Transverse colon (tissue), 4 donors: ENCODE measurements at regions of chr15 and their contacts with region 1.

Region 1: GRCh38 chr15:26950001-26950400 is 21.0 kb upstream of the GABRG3 start:
- DNase-seq: no peak
- H3K4me3 ChIP-seq: no peak overlapping the region
- H3K27ac ChIP-seq: no peak overlapping the region
- H3K4me1 ChIP-seq: no peaks in the 10 kb centered on the region
- H3K27me3 ChIP-seq: no peaks in the 10 kb centered on the region
- CTCF ChIP-seq: no peak
- EP300 ChIP-seq: no peak
- POLR2A ChIP-seq: no peak

Region 2: DNA sequence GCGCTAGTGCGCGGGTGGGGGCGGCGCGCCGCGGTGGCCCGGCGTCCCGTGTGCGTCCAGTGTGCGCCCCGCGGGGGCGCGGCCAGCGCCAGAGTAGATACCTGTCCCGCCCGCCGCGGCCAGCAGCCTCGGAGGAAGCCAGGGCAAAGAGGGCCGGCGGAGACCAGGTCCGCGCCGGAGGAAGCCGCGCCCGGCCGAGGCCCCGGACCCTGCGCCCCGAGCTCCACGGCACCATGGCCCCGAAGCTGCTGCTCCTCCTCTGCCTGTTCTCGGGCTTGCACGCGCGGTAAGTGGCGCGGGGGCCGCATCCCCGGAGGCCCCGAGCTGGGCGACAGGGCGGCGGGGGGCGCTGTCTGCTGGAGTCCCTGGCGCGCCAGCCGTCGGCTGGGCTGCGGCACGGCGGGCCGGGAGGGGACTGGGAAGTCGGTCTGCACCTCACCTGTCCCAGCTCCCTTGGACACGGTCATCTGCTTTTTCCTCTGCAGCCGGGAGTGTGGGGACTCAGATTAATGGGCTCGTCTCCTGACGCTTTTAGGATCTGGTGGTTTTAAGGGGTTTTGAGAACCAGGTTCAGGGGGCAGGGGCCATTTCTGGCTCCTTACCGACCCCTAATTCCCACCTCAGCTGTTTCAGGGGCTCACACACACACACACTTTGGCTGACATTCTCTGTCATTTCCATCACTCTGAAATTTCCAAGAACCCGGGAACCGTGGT is 21.5 kb after region 1 on chr15:
- in situ Hi-C with region 1: no loop called
- intact Hi-C with region 1: loop called (anchors 2 kb)
- DNase-seq: no peak
- H3K4me3 ChIP-seq: no peak overlapping the region
- H3K27ac ChIP-seq: no peak overlapping the region
- H3K4me1 ChIP-seq: no peaks in the 10 kb centered on the region
- H3K27me3 ChIP-seq: peaks cover 13% of the 10 kb centered on the region
- CTCF ChIP-seq: no peak
- EP300 ChIP-seq: no peak
- POLR2A ChIP-seq: no peak